Heart left ventricle (tissue), 16 donors: ENCODE measurements at regions of chr10 and their contacts with region 1.

Region 1: GRCh38 chr10:11510736-11511135 is 100.7 kb downstream of the USP6NL start:
- DNase-seq: no peak
- ATAC-seq: peak in 2 of 4 donors; percentile 32 to 72
- H3K4me3 ChIP-seq: no peak overlapping the region
- H3K27ac ChIP-seq: no peak overlapping the region
- H3K4me1 ChIP-seq: peaks cover 0 to 10% (median 2%) of the 10 kb centered on the region in 12 donors
- H3K27me3 ChIP-seq: no peaks in the 10 kb centered on the region
- CTCF ChIP-seq: no peak
- POLR2A ChIP-seq: no peak

Region 2: DNA sequence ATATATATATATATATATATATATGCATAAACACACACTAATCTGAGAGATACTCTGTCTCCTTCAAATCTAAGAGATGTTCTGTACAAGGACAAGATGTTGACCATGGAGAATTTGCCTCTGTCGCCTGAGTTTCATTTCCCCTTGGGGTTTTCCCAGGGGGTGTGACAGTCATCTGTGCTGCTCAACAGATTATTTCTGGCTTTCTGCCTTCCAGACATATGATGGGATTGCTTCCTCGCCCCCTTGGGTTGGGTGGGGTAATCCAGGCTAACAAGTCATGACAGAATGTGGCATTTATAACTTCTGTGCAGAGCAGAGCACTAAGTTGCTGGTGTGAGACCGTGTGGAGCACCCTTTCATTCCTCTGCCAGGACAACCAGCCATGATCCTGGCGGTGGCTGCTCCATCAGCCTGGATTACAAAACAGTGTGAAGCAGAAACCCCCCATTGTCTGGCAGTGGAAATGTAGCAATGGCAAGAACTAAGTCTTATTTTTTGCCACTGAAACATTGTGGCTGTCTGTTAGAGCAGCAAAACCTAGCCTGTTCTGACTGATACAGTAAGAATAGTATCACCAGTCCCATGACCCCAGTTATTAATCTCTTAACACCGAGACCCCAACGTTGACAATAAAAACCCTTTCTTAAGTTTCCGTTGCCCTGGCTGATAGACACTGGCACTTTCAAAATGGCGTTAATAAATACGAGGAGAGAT is 114.4 kb after region 1 on chr10:
- intact Hi-C with region 1: no loop called
- DNase-seq: no peak
- ATAC-seq: no peak
- H3K4me3 ChIP-seq: no peak overlapping the region
- H3K27ac ChIP-seq: peak overlapping the region in 1 of 12 donors; percentile 8
- H3K4me1 ChIP-seq: peaks cover 0 to 14% (median 0%) of the 10 kb centered on the region in 12 donors
- H3K27me3 ChIP-seq: no peaks in the 10 kb centered on the region
- CTCF ChIP-seq: no peak
- POLR2A ChIP-seq: no peak

Region 3: DNA sequence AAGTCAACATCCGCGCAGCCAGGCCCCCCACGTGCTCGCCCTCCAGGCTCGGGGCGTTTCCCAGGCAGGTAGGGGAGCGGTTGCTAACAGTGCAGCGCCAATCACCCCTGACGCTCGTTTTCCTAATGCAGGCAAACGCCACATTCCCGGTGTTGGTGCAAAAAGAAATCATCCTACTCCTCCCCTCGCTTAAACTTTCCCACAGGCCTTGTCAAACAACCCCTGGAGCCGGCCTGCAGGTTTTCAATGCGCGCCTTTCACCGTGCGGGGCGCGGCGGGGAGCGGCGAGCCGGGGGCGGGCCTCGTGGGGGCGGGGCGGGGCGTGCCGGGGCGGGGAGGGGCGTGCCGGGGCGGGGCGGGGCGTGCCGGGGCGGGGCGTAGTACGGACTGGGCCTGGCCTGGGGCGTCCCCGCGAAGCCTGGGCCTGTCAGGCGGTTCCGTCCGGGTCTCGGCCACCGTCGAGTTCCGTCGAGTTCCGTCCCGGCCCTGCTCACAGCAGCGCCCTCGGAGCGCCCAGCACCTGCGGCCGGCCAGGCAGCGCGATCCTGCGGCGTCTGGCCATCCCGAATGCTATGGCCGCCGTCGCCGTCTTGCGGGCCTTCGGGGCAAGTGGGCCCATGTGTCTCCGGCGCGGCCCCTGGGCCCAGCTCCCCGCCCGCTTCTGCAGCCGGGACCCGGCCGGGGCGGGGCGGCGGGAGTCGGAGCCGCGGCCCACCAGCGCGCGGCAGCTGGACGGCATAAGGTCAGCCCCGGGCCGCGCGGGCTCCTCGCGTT is 231.5 kb after region 1 on chr10 and contains the start of gene ECHDC3:
- intact Hi-C with region 1: loop called in 1 of 10 experiments (anchors 5 kb)
- DNase-seq: peak; percentile 68 to 86 (median 80)
- ATAC-seq: peak; percentile 44 to 90 (median 78)
- H3K4me3 ChIP-seq: peak within 1 kb of the TSS; percentile 46 to 90 (median 66)
- H3K27ac ChIP-seq: peak within 1 kb of the TSS; percentile 78 to 99 (median 92)
- H3K4me1 ChIP-seq: peaks cover 0 to 32% (median 12%) of the 10 kb centered on the region in 12 donors
- H3K27me3 ChIP-seq: peaks cover 0 to 7% (median 0%) of the 10 kb centered on the region in 9 donors
- CTCF ChIP-seq: no peak
- POLR2A ChIP-seq: peak in 1 of 2 donors; percentile 66
- total RNA-seq, gene ECHDC3: 36.8 to 554 (median 66.1) TPM